ENCODE measurements at regions of chr2 and their contacts with region 1.

Region 1: GRCh38 chr2:38274286-38275276 is 102.5 kb downstream of the ATL2 start:
- H3K4me3 Mint-ChIP-seq: no peak overlapping the region
- H3K27ac Mint-ChIP-seq: no peak overlapping the region
- H3K4me1 Mint-ChIP-seq: peaks cover 5% of the 10 kb centered on the region
- H3K27me3 Mint-ChIP-seq: no peaks in the 10 kb centered on the region

Region 2: DNA sequence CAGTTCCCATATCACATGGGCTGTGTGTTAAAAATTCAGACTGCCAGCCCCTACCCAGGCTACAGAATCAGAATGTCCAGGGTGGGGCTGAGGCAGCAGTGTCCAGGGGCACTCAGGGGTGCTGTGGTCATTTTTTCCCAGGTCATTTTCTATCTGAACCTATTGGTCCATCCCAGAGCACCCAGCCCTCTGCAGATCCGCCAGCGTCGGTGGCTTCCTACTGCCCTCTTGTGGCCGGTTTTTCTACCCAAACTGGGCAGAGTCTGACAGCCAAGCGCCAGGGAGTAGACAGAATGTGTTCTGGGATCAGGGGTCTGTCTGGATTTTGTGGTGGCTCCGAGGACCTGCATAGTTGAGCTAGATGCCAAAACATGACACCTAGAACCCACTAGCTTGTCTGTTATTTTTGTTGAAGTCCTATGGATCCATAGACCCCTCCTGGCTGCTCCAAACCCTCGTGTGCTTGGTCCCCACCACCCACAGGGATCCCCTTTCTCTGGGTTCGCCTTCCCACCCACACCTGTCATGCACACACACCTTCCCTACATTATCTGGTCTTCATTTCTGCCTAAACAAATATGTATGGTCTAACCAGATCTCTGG is 383.6 kb before region 1 on chr2:
- intact Hi-C with region 1: loop called (anchors 10 kb)
- H3K4me3 Mint-ChIP-seq: no peak overlapping the region
- H3K27ac Mint-ChIP-seq: peak overlapping the region; percentile 89
- H3K4me1 Mint-ChIP-seq: peaks cover 62% of the 10 kb centered on the region
- H3K27me3 Mint-ChIP-seq: peaks cover 3% of the 10 kb centered on the region

Region 3: GRCh38 chr2:37982147-37982582 is 292.4 kb before region 1 on chr2:
- intact Hi-C with region 1: loop called (anchors 1 kb)
- H3K4me3 Mint-ChIP-seq: no peak overlapping the region
- H3K27ac Mint-ChIP-seq: no peak overlapping the region
- H3K4me1 Mint-ChIP-seq: peaks cover 21% of the 10 kb centered on the region
- H3K27me3 Mint-ChIP-seq: no peaks in the 10 kb centered on the region

Region 4: GRCh38 chr2:38115216-38116032 is 159.2 kb before region 1 on chr2:
- intact Hi-C with region 1: loop called (anchors 5 kb)
- H3K4me3 Mint-ChIP-seq: no peak overlapping the region
- H3K27ac Mint-ChIP-seq: peak overlapping the region; percentile 81
- H3K4me1 Mint-ChIP-seq: peaks cover 81% of the 10 kb centered on the region
- H3K27me3 Mint-ChIP-seq: no peaks in the 10 kb centered on the region

Region 5: DNA sequence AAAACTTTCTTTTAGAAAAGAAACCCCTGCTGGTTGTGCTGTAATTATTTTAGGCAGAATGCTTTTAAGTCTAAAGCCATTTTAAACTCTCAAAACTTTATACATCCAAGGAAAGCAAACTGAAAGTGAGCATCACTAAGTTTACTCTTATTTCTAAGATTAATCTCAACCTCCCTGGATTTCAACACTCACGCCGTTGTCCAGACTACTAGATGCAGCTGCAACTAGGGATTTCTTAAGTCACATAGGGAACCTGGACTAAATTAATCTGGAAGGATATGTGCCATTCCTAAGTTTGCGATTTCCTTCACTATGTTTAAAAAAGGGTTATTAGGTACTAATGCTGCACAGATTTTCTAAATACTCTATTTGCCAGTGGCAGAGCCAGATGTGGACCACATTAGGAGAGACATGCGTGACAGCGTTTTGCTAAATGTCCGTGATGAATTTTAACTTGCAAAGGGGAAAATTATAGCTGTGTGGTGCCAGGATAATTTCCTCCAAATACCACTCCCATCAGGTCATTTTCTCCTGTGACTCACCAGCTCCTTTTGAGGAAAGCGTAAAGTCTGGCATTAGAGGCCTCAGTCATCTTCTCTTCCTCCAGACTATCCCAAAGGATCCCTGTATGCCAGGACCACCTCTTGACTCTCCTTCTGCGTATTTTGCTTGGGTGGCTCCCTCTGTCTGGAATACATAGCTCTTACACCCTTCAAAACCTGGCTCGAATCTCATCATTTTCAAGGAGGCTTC is 41.2 kb before region 1 on chr2:
- intact Hi-C with region 1: no loop called
- H3K4me3 Mint-ChIP-seq: no peak overlapping the region
- H3K27ac Mint-ChIP-seq: no peak overlapping the region
- H3K4me1 Mint-ChIP-seq: peaks cover 13% of the 10 kb centered on the region
- H3K27me3 Mint-ChIP-seq: peaks cover 9% of the 10 kb centered on the region

Region 6: GRCh38 chr2:38572167-38572566 is 297.6 kb after region 1 on chr2:
- intact Hi-C with region 1: no loop called
- H3K4me3 Mint-ChIP-seq: no peak overlapping the region
- H3K27ac Mint-ChIP-seq: peak overlapping the region; percentile 60
- H3K4me1 Mint-ChIP-seq: peaks cover 22% of the 10 kb centered on the region
- H3K27me3 Mint-ChIP-seq: no peaks in the 10 kb centered on the region

Region 7: DNA sequence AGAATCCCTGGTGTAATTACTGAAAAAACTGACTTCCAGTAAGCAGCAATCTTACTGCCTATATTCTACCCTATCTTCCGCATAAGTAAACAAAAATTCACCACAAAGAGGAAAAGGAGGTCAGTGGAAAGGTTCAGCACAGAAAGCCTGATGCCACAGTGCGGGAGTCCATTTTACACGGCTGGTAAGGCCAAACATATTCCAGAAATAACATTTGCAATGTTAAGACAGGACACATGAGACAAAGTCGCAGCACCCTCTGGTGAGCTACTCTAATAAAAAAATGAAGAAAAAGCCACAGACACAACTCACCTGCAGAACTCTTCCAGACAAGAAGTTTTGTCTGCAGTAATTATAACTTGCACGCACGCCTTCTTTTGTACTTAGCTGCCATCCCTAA is 544.0 kb after region 1 on chr2:
- intact Hi-C with region 1: no loop called
- H3K4me3 Mint-ChIP-seq: no peak overlapping the region
- H3K27ac Mint-ChIP-seq: no peak overlapping the region
- H3K4me1 Mint-ChIP-seq: peaks cover 14% of the 10 kb centered on the region
- H3K27me3 Mint-ChIP-seq: no peaks in the 10 kb centered on the region

Measured in dendritic cell treated with granulocyte-macrophage colony-stimulating factor and Interleukin-4, amounts not matched to agents 40 ng/mL and 50 ng/mL, for 4 days (primary cell).